Activated CD4-positive, alpha-beta memory T cell treated with anti-CD3 and anti-CD28 coated beads for 36 hours (primary cell): ENCODE measurements at regions of chr12 and their contacts with region 1.

Region 1: GRCh38 chr12:949453-950191 is at the start of gene RAD52:
- DNase-seq: peak; percentile 98
- H3K4me3 Mint-ChIP-seq: peak within 1 kb of the TSS; percentile 97
- H3K27ac Mint-ChIP-seq: peak within 1 kb of the TSS; percentile 91
- H3K4me1 Mint-ChIP-seq: peaks cover 30% of the 10 kb centered on the region
- H3K27me3 Mint-ChIP-seq: no peaks in the 10 kb centered on the region
- total RNA-seq, gene RAD52: 9.5 to 14.5 TPM

Region 2: DNA sequence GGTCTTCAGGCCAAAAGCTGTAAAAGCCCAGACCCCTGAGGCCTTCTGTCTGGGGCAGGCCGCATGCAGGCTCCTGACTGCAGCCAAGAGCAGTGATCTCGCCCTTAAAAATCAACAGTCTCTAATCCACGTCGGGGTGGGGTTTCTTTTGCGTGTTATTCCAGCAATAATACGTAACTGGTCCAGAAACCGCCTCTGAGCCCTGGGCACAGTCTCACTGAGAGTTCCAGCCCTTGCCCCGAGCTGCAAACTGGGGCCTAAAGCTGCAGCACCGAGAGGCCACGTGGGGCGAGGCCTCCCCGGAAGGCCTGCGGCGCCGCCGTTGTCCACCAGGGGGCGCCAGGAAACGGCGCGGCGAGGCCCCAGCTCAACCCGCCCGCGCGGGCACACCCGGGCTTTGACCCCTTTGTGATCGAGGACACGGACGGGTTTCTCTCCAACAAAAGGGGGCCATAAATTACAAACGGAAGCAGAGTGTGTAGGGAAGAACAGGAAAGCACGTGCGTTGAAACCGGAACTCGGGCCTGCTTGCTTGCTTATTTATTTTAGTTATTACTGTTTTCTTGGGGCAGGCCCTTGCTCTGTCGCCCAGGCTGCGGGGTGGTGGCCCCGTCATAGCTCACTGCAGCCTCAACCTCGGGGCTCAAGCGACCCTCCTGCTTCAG is 373.5 kb before region 1 on chr12:
- CTCF ChIA-PET with region 1: interaction called, 10 read pairs
- POLR2A ChIA-PET with region 1: no interaction called
- intact Hi-C with region 1: no loop called
- DNase-seq: peak; percentile 88
- H3K4me3 Mint-ChIP-seq: peak overlapping the region; percentile 51
- H3K27ac Mint-ChIP-seq: peak overlapping the region; percentile 45
- H3K4me1 Mint-ChIP-seq: peaks cover 34% of the 10 kb centered on the region
- H3K27me3 Mint-ChIP-seq: no peaks in the 10 kb centered on the region

Region 3: DNA sequence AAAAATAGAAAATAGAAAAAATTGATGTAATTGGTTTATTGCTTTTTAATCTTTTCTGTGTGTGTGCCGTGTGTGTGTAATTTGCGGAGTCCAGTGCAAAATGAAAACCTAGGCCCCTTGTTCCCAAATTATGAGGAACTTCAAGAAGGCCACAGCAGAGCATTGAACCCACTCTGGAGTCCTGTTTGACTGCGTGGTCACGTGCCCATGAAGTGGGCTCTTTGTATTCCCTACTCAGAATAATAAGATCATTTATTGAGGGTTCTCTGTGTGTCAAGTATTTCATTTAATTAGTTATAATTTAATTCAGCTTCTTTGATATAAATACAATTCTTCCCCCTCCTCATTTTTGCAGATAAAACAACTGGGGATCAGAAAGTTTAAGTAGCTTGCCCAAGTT is 274.1 kb before region 1 on chr12:
- CTCF ChIA-PET with region 1: no interaction called
- POLR2A ChIA-PET with region 1: no interaction called
- intact Hi-C with region 1: no loop called
- DNase-seq: no peak
- H3K4me3 Mint-ChIP-seq: no peak overlapping the region
- H3K27ac Mint-ChIP-seq: no peak overlapping the region
- H3K4me1 Mint-ChIP-seq: peaks cover 65% of the 10 kb centered on the region
- H3K27me3 Mint-ChIP-seq: peaks cover 8% of the 10 kb centered on the region

Region 4: DNA sequence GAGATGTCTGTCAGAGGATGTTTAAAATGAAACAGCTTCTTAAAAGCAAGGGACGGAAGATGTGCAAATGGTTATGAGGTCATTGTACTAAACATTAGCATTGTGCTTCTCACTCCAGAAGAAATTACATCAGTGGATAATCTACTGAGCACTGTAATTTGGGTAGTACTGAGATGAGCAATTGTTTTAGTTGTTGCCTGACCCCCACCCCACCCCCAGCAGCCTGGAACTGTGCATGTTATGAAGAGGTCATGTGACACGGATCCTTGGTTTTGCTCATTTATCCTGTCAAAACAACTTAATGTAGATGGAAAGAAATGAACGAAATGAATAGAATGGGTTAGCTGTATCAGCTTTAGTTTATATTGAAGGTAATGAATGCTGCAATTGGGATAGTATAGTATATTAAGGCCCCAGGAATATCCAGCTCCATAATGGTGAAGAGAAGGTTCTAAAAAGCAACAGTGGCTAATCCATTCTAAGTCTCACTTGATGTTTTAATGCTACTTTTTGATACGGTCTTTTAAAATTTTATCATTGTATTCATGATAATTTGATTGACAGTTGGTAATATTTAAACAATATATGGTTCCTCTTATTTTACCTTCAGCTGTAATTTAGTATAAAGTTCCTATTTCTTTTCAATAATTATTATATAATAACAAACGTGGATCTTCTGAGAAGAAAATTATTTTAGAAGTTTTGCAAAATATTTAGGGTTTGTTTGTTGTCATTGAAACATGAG is 138.8 kb before region 1 on chr12:
- CTCF ChIA-PET with region 1: interaction called, 19 read pairs
- POLR2A ChIA-PET with region 1: interaction called, 5 read pairs
- intact Hi-C with region 1: loop called (anchors 1 kb)
- DNase-seq: peak; percentile 86
- H3K4me3 Mint-ChIP-seq: peak overlapping the region; percentile 8
- H3K27ac Mint-ChIP-seq: peak overlapping the region; percentile 15
- H3K4me1 Mint-ChIP-seq: peaks cover 70% of the 10 kb centered on the region
- H3K27me3 Mint-ChIP-seq: no peaks in the 10 kb centered on the region

Region 5: GRCh38 chr12:990661-991349 is 41.2 kb after region 1 on chr12 and contains the start of gene ERC1:
- CTCF ChIA-PET with region 1: interaction called, 9 read pairs
- POLR2A ChIA-PET with region 1: interaction called, 8 read pairs
- intact Hi-C with region 1: loop called (anchors 1 kb)
- DNase-seq: peak; percentile 87
- H3K4me3 Mint-ChIP-seq: peak within 1 kb of the TSS; percentile 94
- H3K27ac Mint-ChIP-seq: peak within 1 kb of the TSS; percentile 87
- H3K4me1 Mint-ChIP-seq: peaks cover 35% of the 10 kb centered on the region
- H3K27me3 Mint-ChIP-seq: no peaks in the 10 kb centered on the region
- total RNA-seq, gene ERC1: 19.1 to 21.8 TPM

Region 6: GRCh38 chr12:1099158-1099557 is 149.5 kb after region 1 on chr12:
- CTCF ChIA-PET with region 1: interaction called, 11 read pairs
- POLR2A ChIA-PET with region 1: no interaction called
- intact Hi-C with region 1: loop called (anchors 5 kb)
- DNase-seq: peak; percentile 67
- H3K4me3 Mint-ChIP-seq: no peak overlapping the region
- H3K27ac Mint-ChIP-seq: no peak overlapping the region
- H3K4me1 Mint-ChIP-seq: peaks cover 35% of the 10 kb centered on the region
- H3K27me3 Mint-ChIP-seq: no peaks in the 10 kb centered on the region

Region 7: GRCh38 chr12:1594261-1595025 is 644.8 kb after region 1 on chr12 and contains the start of gene FBXL14:
- CTCF ChIA-PET with region 1: interaction called, 4 read pairs
- POLR2A ChIA-PET with region 1: interaction called, 7 read pairs
- intact Hi-C with region 1: loop called (anchors 1 kb)
- DNase-seq: peak; percentile 91
- H3K4me3 Mint-ChIP-seq: peak within 1 kb of the TSS; percentile 94
- H3K27ac Mint-ChIP-seq: peak within 1 kb of the TSS; percentile 91
- H3K4me1 Mint-ChIP-seq: peaks cover 31% of the 10 kb centered on the region
- H3K27me3 Mint-ChIP-seq: no peaks in the 10 kb centered on the region
- total RNA-seq, gene FBXL14: 13.5 to 14.4 TPM